ENCODE measurements at regions of chr2 and their contacts with region 1.

Region 1: GRCh38 chr2:176454893-176455811 is 185.9 kb downstream of the MTX2 start:
- DNase-seq: peak; percentile 87
- H3K4me3 ChIP-seq: no peak overlapping the region
- H3K27ac ChIP-seq: no peak overlapping the region
- H3K4me1 ChIP-seq: peaks cover 3% of the 10 kb centered on the region
- H3K27me3 ChIP-seq: no peaks in the 10 kb centered on the region
- CTCF ChIP-seq: peak; percentile 78 to 82
- POLR2A ChIP-seq: no peak

Region 2: DNA sequence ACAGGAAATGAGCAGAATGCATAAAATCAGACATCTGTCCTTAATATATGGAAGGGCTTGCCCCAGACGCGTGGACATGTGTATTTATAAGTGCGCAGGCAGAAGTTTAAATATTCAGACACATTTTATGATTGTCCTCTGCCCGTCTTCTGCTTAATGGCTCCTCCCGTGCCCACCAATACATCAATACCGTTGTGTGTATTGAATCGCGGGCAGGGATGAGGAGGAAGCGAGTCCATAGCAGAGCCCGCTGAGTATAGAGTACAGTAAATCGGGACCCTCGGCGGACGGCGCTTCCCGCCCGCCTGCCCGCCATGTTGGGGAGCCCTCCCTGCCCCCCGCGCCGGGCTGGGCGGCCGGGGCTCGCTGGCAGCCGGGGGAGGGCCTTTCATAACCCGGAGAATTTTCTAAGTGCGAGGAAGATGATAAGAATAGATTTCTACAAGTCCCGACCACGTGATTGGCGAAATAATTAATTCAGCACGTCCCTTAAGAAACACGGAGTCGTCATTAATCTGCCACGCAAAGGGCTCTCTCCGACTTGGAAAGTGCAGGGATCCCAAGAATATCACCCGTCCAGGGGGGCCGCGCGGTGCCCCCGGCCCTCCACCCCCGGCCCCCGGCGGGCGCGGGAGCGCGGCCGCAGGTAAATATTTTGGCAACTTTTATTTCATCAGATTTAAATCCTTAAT is 298.2 kb before region 1 on chr2 and contains the start of gene HOXD3:
- CTCF ChIA-PET with region 1: interaction called, 25 read pairs
- POLR2A ChIA-PET with region 1: no interaction called
- dilution Hi-C with region 1: no loop called
- intact Hi-C with region 1: no loop called
- DNase-seq: peak; percentile 25
- H3K4me3 ChIP-seq: peak within 1 kb of the TSS; percentile 19 to 48 (median 21)
- H3K27ac ChIP-seq: no peak within 1 kb of the TSS
- H3K4me1 ChIP-seq: no peaks in the 10 kb centered on the region
- H3K27me3 ChIP-seq: no peaks in the 10 kb centered on the region
- CTCF ChIP-seq: no peak
- POLR2A ChIP-seq: no peak
- total RNA-seq, gene HOXD3: 15.3 and 20.9 TPM in 2 replicates

Region 3: GRCh38 chr2:176187899-176188773 is 267.0 kb before region 1 on chr2 and contains the start of gene HOXD1:
- CTCF ChIA-PET with region 1: interaction called, 59 read pairs
- POLR2A ChIA-PET with region 1: no interaction called
- dilution Hi-C with region 1: no loop called
- intact Hi-C with region 1: loop called (anchors 1 kb)
- DNase-seq: peak; percentile 83
- H3K4me3 ChIP-seq: peak within 1 kb of the TSS; percentile 86 to 96 (median 93)
- H3K27ac ChIP-seq: peak within 1 kb of the TSS; percentile 74
- H3K4me1 ChIP-seq: peaks cover 33% of the 10 kb centered on the region
- H3K27me3 ChIP-seq: no peaks in the 10 kb centered on the region
- CTCF ChIP-seq: no peak
- POLR2A ChIP-seq: peak; percentile 86
- total RNA-seq, gene HOXD1: 10.4 and 14.1 TPM in 2 replicates

Region 4: DNA sequence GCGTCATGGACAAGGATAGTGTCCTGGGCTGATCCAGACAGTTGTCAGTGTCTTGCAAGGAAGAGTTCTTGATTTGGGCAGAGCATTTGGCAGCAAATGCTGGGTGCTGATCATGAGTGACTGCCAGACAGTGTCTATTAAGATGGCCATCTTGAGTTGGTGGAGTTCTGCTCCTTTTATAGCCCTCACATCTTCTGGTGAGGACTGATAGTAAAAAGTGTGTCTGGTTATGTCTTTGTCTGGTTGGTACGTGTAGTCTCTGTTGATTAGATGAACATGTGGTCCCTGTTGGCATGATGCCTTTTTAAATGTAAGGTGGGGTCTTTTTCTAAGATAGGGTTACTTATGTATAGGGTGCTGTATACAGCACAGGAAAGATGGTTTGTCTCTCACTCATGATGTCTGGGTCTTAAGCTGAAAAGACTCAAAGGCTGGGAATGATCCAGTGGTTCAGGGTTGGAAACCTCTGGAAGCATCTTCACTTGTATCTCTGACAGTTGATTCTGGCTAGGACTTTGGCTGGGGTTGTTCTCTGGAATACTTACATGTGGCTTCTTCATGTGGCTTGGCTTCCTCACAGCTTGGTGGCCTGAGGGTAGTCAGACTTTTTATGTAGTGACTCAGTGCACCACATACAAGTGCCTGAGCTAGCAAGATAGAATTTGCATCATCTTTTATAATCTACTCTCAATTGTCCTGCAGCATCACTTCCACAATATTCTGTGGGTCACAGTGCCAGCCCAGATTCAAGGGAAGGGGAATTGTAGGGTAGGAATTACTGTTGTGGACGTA is 174.1 kb before region 1 on chr2:
- CTCF ChIA-PET with region 1: interaction called, 19 read pairs
- POLR2A ChIA-PET with region 1: no interaction called
- dilution Hi-C with region 1: no loop called
- intact Hi-C with region 1: no loop called
- DNase-seq: no peak
- H3K4me3 ChIP-seq: no peak overlapping the region
- H3K27ac ChIP-seq: no peak overlapping the region
- H3K4me1 ChIP-seq: peaks cover 19% of the 10 kb centered on the region
- H3K27me3 ChIP-seq: no peaks in the 10 kb centered on the region
- CTCF ChIP-seq: no peak
- POLR2A ChIP-seq: no peak

Region 5: DNA sequence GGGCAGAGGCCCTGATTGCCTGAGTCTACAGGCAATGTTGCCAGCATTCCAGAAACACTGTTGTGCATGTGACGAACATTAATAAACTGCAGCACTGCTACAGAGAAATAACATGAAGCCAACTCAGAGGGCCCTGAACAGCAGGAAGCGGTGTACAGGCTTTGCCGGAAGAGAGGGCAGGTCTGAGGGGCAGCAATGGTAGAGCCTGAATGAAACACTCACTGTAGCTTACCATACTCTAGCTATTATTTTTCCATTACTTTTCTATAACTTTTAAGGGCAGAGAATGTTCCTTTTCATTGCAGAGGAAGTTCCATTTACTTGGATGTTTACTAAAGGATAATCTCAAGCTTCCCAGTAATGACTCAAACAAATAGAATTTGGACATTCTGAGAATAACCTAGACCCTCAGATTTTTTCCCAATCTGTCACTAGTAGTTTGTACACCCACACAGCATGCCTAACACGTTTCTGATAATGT is 35.5 kb before region 1 on chr2:
- CTCF ChIA-PET with region 1: interaction called, 25 read pairs
- POLR2A ChIA-PET with region 1: no interaction called
- dilution Hi-C with region 1: no loop called
- intact Hi-C with region 1: loop called (anchors 2 kb)
- DNase-seq: peak; percentile 97
- H3K4me3 ChIP-seq: no peak overlapping the region
- H3K27ac ChIP-seq: peak overlapping the region; percentile 92
- H3K4me1 ChIP-seq: peaks cover 42% of the 10 kb centered on the region
- H3K27me3 ChIP-seq: no peaks in the 10 kb centered on the region
- CTCF ChIP-seq: no peak
- POLR2A ChIP-seq: peak; percentile 65

Region 6: DNA sequence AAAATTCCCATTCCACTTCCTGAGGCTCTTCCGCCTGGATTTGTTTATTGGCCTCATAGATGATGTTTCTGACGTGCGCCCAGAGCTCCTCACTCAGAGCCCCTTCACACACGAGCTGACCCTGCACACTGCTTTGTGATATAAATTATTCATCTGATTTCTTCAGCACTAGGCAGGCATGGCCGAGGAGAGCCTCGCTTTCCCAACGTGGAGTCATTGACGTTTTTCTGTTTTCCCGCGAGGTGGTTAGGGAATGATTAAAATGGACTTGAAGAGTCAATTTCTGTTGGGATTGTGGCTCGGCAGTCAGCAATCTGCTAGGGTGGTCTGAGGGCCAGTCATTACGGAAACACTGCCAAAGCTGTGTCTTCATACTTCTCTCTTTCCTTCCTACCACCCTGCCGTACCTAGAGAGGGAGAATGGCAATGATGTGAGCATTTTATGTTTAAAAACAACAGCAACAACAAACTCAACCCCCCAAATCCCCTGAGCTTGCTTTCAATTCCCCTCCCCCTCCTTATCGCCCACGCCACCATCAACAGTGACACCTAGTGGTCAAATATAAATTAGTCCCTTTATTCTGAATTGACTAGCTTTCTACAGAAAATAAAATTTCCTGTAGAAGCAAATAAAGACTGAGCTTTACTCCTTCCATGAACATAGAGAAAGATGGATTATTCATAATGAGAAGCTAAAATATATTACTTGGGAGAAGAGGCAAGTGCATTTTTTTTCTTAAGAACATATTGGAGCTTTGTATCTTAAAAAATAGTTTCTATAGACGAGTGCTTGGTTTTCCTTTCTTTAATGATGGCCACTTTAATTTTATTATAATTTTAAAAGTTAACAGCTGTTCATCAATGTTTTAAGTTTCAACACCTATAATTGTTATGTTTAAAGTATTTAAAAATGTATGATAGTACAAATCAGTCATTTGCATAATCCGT is 99.2 kb after region 1 on chr2:
- CTCF ChIA-PET with region 1: interaction called, 243 read pairs
- POLR2A ChIA-PET with region 1: interaction called, 5 read pairs
- dilution Hi-C with region 1: no loop called
- intact Hi-C with region 1: loop called (anchors 1 kb)
- DNase-seq: peak; percentile 89
- H3K4me3 ChIP-seq: peak overlapping the region; percentile 11 to 48 (median 44)
- H3K27ac ChIP-seq: peak overlapping the region; percentile 77
- H3K4me1 ChIP-seq: peaks cover 13% of the 10 kb centered on the region
- H3K27me3 ChIP-seq: no peaks in the 10 kb centered on the region
- CTCF ChIP-seq: peak; percentile 47 to 65
- POLR2A ChIP-seq: no peak

Region 7: GRCh38 chr2:177029480-177029879 is 574.3 kb after region 1 on chr2:
- CTCF ChIA-PET with region 1: no interaction called
- POLR2A ChIA-PET with region 1: no interaction called
- dilution Hi-C with region 1: no loop called
- intact Hi-C with region 1: no loop called
- DNase-seq: no peak
- H3K4me3 ChIP-seq: no peak overlapping the region
- H3K27ac ChIP-seq: no peak overlapping the region
- H3K4me1 ChIP-seq: no peaks in the 10 kb centered on the region
- H3K27me3 ChIP-seq: peaks cover 2 to 5% of the 10 kb centered on the region in 2 experiments
- CTCF ChIP-seq: no peak
- POLR2A ChIP-seq: no peak

Region 8: DNA sequence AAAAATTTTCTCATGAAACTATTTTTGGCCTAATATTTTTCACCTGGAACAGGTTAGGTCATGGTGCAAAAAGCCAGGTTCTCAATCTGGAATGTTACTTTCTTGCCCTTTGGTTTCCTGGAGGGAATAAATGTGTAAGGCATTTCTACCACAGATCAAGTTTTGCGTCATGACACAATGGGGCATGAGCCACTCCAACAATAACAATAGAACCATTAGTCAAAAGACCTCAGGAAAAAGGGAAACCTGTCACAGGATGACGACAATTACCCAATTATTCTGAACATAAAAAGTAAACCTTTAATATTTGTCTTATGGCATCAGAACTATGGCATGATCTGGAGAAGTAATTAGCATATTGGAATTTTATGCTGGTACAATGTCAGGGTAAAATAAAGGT is 669.2 kb after region 1 on chr2:
- CTCF ChIA-PET with region 1: no interaction called
- POLR2A ChIA-PET with region 1: no interaction called
- dilution Hi-C with region 1: no loop called
- intact Hi-C with region 1: no loop called
- DNase-seq: peak; percentile 79
- H3K4me3 ChIP-seq: no peak overlapping the region
- H3K27ac ChIP-seq: no peak overlapping the region
- H3K4me1 ChIP-seq: peaks cover 8% of the 10 kb centered on the region
- H3K27me3 ChIP-seq: no peaks in the 10 kb centered on the region
- CTCF ChIP-seq: no peak
- POLR2A ChIP-seq: no peak

Region 9: DNA sequence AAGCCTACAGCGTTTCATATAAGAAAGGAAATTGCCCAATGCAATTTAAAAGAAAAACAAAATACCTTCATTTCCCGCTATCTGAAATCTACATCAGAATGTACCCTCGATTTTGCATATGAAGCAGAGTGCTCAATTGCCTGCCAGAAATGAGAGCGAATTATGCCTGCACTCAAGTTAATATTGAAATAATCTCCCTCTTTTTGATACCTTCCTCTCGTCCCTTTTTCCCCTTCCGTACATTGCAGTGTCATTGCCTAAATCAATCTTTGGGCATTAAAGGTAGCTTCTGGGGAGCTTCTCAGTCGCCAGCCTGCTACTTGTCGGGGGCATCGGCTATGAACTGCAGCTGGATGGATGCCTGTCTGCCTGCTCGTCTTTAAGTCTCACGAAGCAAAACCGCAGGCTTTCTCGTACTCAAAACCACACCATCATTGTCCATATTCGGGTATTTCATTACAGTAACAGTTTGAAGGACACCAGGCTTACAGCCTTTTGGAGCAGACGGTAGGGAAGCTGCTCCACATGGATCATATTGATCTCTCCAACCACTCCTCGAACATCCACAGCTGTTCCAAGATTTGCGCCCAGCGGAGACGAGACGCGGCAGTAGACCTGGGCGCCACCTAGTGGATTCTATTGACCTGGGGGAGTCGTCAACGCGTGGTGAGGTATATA is 693.5 kb after region 1 on chr2:
- CTCF ChIA-PET with region 1: interaction called, 4 read pairs
- POLR2A ChIA-PET with region 1: no interaction called
- dilution Hi-C with region 1: no loop called
- intact Hi-C with region 1: loop called (anchors 2 kb)
- DNase-seq: peak; percentile 85
- H3K4me3 ChIP-seq: peak overlapping the region in 2 of 3 experiments; percentile 29 to 62
- H3K27ac ChIP-seq: no peak overlapping the region
- H3K4me1 ChIP-seq: peaks cover 10% of the 10 kb centered on the region
- H3K27me3 ChIP-seq: peaks cover 9% of the 10 kb centered on the region in 2 experiments
- CTCF ChIP-seq: peak; percentile 87 to 89
- POLR2A ChIP-seq: no peak

Measured in endothelial cell of umbilical vein (primary cell).